Activated CD4-positive, alpha-beta T cell treated with anti-CD3 and anti-CD28 coated beads for 36 hours (primary cell): ENCODE measurements at regions of chr11 and their contacts with region 1.

Region 1: GRCh38 chr11:77619576-77620198 is 17.9 kb downstream of the CLNS1A start:
- DNase-seq: no peak
- ATAC-seq: peak; percentile 61
- H3K4me3 Mint-ChIP-seq: no peak overlapping the region
- H3K27ac Mint-ChIP-seq: peak overlapping the region; percentile 2
- H3K4me1 Mint-ChIP-seq: no peaks in the 10 kb centered on the region
- H3K27me3 Mint-ChIP-seq: no peaks in the 10 kb centered on the region

Region 2: DNA sequence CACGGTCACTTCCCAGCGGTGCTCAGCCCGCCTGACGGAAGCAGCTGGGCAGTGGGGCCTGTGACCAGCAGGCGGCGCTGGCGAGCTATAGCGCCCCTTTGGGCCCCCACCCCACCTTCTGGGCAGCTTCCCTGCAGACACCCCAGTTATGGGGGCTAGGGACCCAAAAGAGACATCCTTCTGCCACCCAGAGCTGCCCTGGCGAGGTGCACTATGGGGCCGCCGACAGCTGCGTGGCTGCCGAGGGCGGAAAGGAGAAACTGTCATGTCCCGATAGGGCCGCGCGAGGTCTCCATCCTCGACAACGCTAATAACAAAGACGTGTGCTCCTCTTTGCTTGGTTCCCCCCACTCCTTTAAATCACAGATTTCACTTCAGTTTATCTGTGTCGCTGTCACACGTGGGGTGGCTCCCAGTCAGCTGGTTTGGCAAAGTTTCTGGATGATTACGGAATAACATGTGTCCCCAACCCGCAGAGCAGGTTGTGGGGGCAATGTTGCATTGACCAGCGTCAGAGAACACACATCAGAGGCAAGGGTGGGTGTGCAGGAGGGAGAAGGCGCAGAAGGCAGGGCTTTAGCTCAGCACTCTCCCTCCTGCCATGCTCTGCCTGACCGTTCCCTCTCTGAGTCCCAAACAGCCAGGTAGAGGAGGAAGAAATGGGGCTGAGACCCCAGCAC is 492.3 kb before region 1 on chr11:
- CTCF ChIA-PET with region 1: interaction called, 3 read pairs
- POLR2A ChIA-PET with region 1: no interaction called
- intact Hi-C with region 1: loop called in 1 of 2 experiments (anchors 1 kb)
- DNase-seq: peak; percentile 75
- ATAC-seq: peak; percentile 89
- H3K4me3 Mint-ChIP-seq: peak overlapping the region; percentile 39
- H3K27ac Mint-ChIP-seq: peak overlapping the region; percentile 25
- H3K4me1 Mint-ChIP-seq: peaks cover 5% of the 10 kb centered on the region
- H3K27me3 Mint-ChIP-seq: peaks cover 3% of the 10 kb centered on the region

Region 3: GRCh38 chr11:77147668-77148321 is 471.9 kb before region 1 on chr11:
- CTCF ChIA-PET with region 1: no interaction called
- POLR2A ChIA-PET with region 1: no interaction called
- intact Hi-C with region 1: no loop called
- DNase-seq: peak; percentile 45
- ATAC-seq: peak; percentile 23
- H3K4me3 Mint-ChIP-seq: peak overlapping the region; percentile 40
- H3K27ac Mint-ChIP-seq: peak overlapping the region; percentile 16
- H3K4me1 Mint-ChIP-seq: peaks cover 20% of the 10 kb centered on the region
- H3K27me3 Mint-ChIP-seq: peaks cover 3% of the 10 kb centered on the region

Region 4: GRCh38 chr11:77187776-77188632 is 431.7 kb before region 1 on chr11:
- CTCF ChIA-PET with region 1: interaction called, 3 read pairs
- POLR2A ChIA-PET with region 1: interaction called, 3 read pairs
- intact Hi-C with region 1: loop called (anchors 1 to 2 kb)
- DNase-seq: peak; percentile 86
- ATAC-seq: peak; percentile 71
- H3K4me3 Mint-ChIP-seq: no peak overlapping the region
- H3K27ac Mint-ChIP-seq: no peak overlapping the region
- H3K4me1 Mint-ChIP-seq: peaks cover 3% of the 10 kb centered on the region
- H3K27me3 Mint-ChIP-seq: no peaks in the 10 kb centered on the region

Region 5: GRCh38 chr11:77411717-77412441 is 207.8 kb before region 1 on chr11:
- CTCF ChIA-PET with region 1: interaction called, 5 read pairs
- POLR2A ChIA-PET with region 1: no interaction called
- intact Hi-C with region 1: loop called in 1 of 2 experiments (anchors 5 kb)
- DNase-seq: peak; percentile 91
- ATAC-seq: peak; percentile 98
- H3K4me3 Mint-ChIP-seq: peak overlapping the region; percentile 76
- H3K27ac Mint-ChIP-seq: peak overlapping the region; percentile 79
- H3K4me1 Mint-ChIP-seq: peaks cover 30% of the 10 kb centered on the region
- H3K27me3 Mint-ChIP-seq: no peaks in the 10 kb centered on the region

Region 6: GRCh38 chr11:77602381-77603088 is 17.2 kb before region 1 on chr11:
- CTCF ChIA-PET with region 1: interaction called, 27 read pairs
- POLR2A ChIA-PET with region 1: interaction called, 6 read pairs
- intact Hi-C with region 1: no loop called
- DNase-seq: no peak
- ATAC-seq: peak; percentile 26
- H3K4me3 Mint-ChIP-seq: no peak overlapping the region
- H3K27ac Mint-ChIP-seq: no peak overlapping the region
- H3K4me1 Mint-ChIP-seq: no peaks in the 10 kb centered on the region
- H3K27me3 Mint-ChIP-seq: no peaks in the 10 kb centered on the region

Region 7: DNA sequence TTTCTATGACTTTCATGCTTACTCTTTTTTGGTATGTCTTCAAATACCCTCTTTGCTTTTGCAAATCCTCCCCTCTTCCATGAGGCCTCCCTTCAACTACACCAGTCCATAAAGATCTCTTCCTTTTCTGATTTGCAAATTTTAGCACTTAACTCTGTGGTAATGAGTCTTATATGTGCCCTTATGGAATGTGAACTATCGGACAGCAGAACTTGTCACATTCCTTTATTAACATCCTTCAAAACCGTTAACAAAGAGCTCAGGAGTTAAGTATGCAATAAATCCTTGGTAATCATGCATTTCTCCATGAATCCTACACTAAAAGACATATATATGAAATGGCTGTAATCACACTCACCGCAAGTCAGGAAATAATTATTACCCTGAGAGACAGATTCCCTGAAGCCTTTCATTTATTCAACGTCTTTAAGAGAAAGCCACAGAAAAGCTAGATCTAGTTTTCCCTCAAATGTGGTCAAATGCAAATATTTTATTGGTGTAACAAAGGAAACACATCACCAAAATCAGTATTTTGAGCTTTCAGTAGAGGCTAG is 10.5 kb after region 1 on chr11:
- CTCF ChIA-PET with region 1: interaction called, 13 read pairs
- POLR2A ChIA-PET with region 1: no interaction called
- intact Hi-C with region 1: no loop called
- DNase-seq: no peak
- ATAC-seq: no peak
- H3K4me3 Mint-ChIP-seq: no peak overlapping the region
- H3K27ac Mint-ChIP-seq: peak overlapping the region; percentile 49
- H3K4me1 Mint-ChIP-seq: peaks cover 40% of the 10 kb centered on the region
- H3K27me3 Mint-ChIP-seq: no peaks in the 10 kb centered on the region